ENCODE measurements at regions of chr3 and their contacts with region 1.

Region 1: GRCh38 chr3:194315088-194315964 is 35.8 kb downstream of the CPN2 start:
- DNase-seq: peak; percentile 93
- ATAC-seq: peak; percentile 85
- H3K4me3 Mint-ChIP-seq: peak overlapping the region; percentile 72
- H3K27ac Mint-ChIP-seq: no peak overlapping the region
- H3K4me1 Mint-ChIP-seq: peaks cover 35% of the 10 kb centered on the region
- H3K27me3 Mint-ChIP-seq: peaks cover 48% of the 10 kb centered on the region
- CTCF ChIP-seq: peak; percentile 93

Region 2: GRCh38 chr3:193816590-193817311 is 498.6 kb before region 1 on chr3:
- CTCF ChIA-PET with region 1: interaction called, 13 read pairs
- POLR2A ChIA-PET with region 1: no interaction called
- DNase-seq: peak; percentile 84
- ATAC-seq: peak; percentile 66
- H3K4me3 Mint-ChIP-seq: peak overlapping the region; percentile 56
- H3K27ac Mint-ChIP-seq: peak overlapping the region; percentile 99
- H3K4me1 Mint-ChIP-seq: peaks cover 90% of the 10 kb centered on the region
- H3K27me3 Mint-ChIP-seq: no peaks in the 10 kb centered on the region; the same call in 1 of the 2 replicates
- CTCF ChIP-seq: no peak

Region 3: DNA sequence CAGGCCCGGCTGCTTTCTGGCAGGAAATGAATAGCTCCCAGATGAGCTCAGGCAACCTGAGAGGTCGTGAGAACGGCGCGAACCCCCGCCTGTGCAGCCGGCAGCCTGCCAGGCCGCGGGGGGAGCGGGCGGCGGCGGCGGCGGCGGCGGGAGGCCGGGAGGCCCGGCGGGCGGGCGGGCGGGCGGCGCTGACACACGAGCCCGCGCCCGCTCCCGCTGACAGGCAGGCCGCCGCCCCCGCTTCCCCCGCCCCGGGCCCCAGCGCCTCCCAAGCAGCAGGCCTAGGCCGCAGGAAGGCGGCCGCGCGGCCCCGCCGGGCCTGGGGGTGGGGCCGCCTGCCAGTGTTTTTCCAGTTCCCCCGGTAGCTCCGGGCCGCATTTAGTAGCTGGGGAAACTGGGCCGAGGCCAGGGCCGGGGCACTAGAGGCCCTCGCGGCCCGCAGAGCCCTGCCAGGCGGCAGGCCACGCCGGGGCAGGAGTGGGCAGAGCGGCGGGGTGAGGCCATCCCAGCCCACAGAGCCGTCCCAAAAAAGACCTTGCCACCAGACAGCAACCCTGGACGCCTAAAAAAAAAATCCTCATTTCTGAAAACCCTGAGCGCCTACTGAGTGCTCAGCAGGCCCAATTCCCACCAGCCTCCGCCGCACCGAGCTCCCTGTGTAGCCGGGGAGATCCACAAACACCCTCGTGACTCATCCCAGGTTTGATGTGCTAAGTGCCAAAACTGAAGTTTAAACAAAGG is 173.7 kb before region 1 on chr3:
- CTCF ChIA-PET with region 1: interaction called, 34 read pairs
- POLR2A ChIA-PET with region 1: interaction called, 8 read pairs
- DNase-seq: peak; percentile 87
- ATAC-seq: peak; percentile 52
- H3K4me3 Mint-ChIP-seq: peak overlapping the region; percentile 10
- H3K27ac Mint-ChIP-seq: peak overlapping the region; percentile 90
- H3K4me1 Mint-ChIP-seq: peaks cover 40% of the 10 kb centered on the region
- H3K27me3 Mint-ChIP-seq: no peaks in the 10 kb centered on the region
- CTCF ChIP-seq: no peak

Region 4: GRCh38 chr3:194184265-194184751 is 131.0 kb before region 1 on chr3:
- CTCF ChIA-PET with region 1: interaction called, 10 read pairs
- POLR2A ChIA-PET with region 1: no interaction called
- DNase-seq: no peak
- ATAC-seq: peak; percentile 60
- H3K4me3 Mint-ChIP-seq: no peak overlapping the region
- H3K27ac Mint-ChIP-seq: peak overlapping the region; percentile 96
- H3K4me1 Mint-ChIP-seq: peaks cover 19% of the 10 kb centered on the region
- H3K27me3 Mint-ChIP-seq: no peaks in the 10 kb centered on the region
- CTCF ChIP-seq: no peak

Region 5: DNA sequence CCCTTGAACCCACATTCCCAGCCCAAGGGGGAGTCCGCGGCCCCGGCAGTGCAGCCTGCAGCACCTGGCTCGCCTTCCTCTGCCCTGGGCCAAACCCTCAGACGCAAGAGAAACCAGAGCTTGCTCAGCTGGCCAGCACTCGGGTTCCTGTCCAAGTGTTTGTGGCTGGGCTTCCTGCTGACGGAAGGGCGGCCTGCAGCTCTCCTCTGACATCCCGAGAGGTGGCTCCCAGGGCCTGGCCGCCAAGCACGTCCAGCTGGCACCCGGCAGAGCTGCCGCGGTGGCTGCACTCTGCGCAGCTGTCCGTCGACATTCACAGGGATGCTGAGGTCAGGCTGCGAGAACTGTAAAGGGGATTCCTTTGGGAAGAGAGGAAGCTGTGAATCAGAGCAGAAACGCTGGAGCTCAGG is 49.8 kb before region 1 on chr3:
- CTCF ChIA-PET with region 1: interaction called, 32 read pairs
- POLR2A ChIA-PET with region 1: no interaction called
- DNase-seq: no peak
- ATAC-seq: no peak
- H3K4me3 Mint-ChIP-seq: no peak overlapping the region
- H3K27ac Mint-ChIP-seq: peak overlapping the region; percentile 45; the same call in 1 of the 2 replicates
- H3K4me1 Mint-ChIP-seq: peaks cover 30% of the 10 kb centered on the region
- H3K27me3 Mint-ChIP-seq: 0 out of 2 replicates have a peak, but pooled peaks cover 2% of the 10 kb centered on the region
- CTCF ChIP-seq: no peak

Region 6: GRCh38 chr3:194296454-194297263 is 18.7 kb before region 1 on chr3:
- CTCF ChIA-PET with region 1: interaction called, 52 read pairs
- POLR2A ChIA-PET with region 1: interaction called, 4 read pairs
- DNase-seq: peak; percentile 84
- ATAC-seq: peak; percentile 59
- H3K4me3 Mint-ChIP-seq: peak overlapping the region; percentile 51
- H3K27ac Mint-ChIP-seq: peak overlapping the region; percentile 84
- H3K4me1 Mint-ChIP-seq: peaks cover 49% of the 10 kb centered on the region
- H3K27me3 Mint-ChIP-seq: peaks cover 6% of the 10 kb centered on the region
- CTCF ChIP-seq: no peak

Region 7: GRCh38 chr3:194497821-194498598 is 182.7 kb after region 1 on chr3:
- CTCF ChIA-PET with region 1: no interaction called
- POLR2A ChIA-PET with region 1: no interaction called
- DNase-seq: peak; percentile 16
- ATAC-seq: peak; percentile 78
- H3K4me3 Mint-ChIP-seq: no peak overlapping the region
- H3K27ac Mint-ChIP-seq: peak overlapping the region; percentile 54
- H3K4me1 Mint-ChIP-seq: peaks cover 9% of the 10 kb centered on the region
- H3K27me3 Mint-ChIP-seq: no peaks in the 10 kb centered on the region
- CTCF ChIP-seq: no peak

Region 8: DNA sequence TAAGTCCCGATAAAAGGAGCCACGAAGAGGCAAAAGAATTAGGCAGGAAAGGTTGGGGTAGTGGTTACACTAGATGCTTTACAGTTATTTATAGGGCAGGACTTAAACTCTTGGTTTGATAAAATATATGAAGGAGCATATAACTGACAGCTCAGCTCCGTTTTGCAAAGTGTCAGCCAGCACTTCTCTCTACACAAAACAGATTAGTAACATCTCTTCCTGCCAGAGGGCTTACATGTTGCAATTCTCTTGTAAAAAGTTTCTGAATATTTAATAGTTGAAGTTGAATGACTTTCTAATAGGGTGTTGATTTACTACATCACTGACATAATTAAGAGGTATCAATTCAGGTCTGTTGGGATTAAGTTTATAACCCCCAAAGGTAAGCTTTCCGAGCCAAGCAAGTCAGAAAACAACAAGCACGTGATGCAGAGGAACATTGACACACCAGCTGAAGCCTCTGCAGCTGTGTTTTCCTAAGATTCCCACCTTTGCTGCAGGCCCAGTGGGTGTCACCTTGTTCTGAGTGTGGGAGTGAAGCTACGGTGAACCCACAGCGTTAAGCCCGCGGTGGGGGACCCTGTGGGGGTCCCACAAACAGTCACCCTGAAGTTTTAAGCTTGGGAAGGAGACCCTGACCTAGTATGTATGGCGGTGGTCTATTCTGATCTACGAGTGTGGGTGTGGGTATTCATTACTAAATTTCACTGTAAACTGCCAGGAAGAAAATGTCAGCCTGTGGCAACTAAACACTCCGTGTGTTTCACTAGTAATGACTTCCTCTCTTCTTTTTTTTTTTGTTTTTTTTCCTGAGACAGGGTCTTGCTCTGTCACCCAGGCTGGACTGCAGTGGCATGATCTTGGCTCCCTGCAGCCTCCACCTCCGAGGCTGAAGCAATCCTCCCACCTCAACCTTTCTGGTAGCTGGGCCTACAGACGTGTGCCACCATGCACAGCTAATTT is 193.4 kb after region 1 on chr3:
- CTCF ChIA-PET with region 1: no interaction called
- POLR2A ChIA-PET with region 1: no interaction called
- DNase-seq: no peak
- ATAC-seq: no peak
- H3K4me3 Mint-ChIP-seq: no peak overlapping the region
- H3K27ac Mint-ChIP-seq: no peak overlapping the region
- H3K4me1 Mint-ChIP-seq: no peaks in the 10 kb centered on the region
- H3K27me3 Mint-ChIP-seq: no peaks in the 10 kb centered on the region
- CTCF ChIP-seq: no peak

Region 9: DNA sequence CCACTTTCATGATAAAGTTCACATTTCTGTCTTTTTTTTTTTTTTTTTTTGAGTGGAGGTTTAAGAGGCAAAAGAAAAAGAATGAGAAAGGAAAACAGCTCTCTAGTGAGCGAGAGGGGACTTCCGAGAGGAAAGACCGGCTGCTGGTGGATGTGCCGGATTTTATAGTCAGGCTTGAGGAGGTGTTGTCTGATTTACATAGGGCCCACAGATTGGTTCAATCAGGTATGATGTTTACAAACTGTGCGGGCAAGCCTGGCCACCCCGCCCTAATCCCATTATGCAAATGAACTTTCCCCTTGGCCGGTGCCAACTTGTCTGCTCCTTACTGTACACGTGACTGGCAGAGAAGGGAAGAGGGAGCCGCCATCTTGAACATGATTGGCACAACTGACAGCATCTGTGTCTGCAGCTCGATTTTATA is 415.0 kb after region 1 on chr3:
- CTCF ChIA-PET with region 1: no interaction called
- POLR2A ChIA-PET with region 1: no interaction called
- DNase-seq: no peak
- ATAC-seq: peak; percentile 28
- H3K4me3 Mint-ChIP-seq: no peak overlapping the region
- H3K27ac Mint-ChIP-seq: no peak overlapping the region
- H3K4me1 Mint-ChIP-seq: peaks cover 18% of the 10 kb centered on the region
- H3K27me3 Mint-ChIP-seq: peaks cover 6% of the 10 kb centered on the region; the same call in 1 of the 2 replicates
- CTCF ChIP-seq: no peak